Left colon (tissue), 2 donors: ENCODE measurements at regions of chr17 and their contacts with region 1.

Region 1: GRCh38 chr17:5055543-5055942 is 20.3 kb upstream of the SLC52A1 start:
- DNase-seq: no peak
- ATAC-seq: no peak

Region 2: GRCh38 chr17:4913994-4914393 is 141.5 kb before region 1 on chr17:
- intact Hi-C with region 1: loop called in 1 of 2 experiments (anchors 5 kb)
- DNase-seq: no peak
- ATAC-seq: peak; percentile 60

Region 3: GRCh38 chr17:4980644-4981216 is 74.8 kb before region 1 on chr17:
- intact Hi-C with region 1: loop called in 1 of 2 experiments (anchors 5 kb)
- DNase-seq: no peak
- ATAC-seq: peak; percentile 77

Region 4: GRCh38 chr17:4994081-4994595 is 61.4 kb before region 1 on chr17:
- intact Hi-C with region 1: no loop called
- DNase-seq: no peak
- ATAC-seq: no peak

Region 5: DNA sequence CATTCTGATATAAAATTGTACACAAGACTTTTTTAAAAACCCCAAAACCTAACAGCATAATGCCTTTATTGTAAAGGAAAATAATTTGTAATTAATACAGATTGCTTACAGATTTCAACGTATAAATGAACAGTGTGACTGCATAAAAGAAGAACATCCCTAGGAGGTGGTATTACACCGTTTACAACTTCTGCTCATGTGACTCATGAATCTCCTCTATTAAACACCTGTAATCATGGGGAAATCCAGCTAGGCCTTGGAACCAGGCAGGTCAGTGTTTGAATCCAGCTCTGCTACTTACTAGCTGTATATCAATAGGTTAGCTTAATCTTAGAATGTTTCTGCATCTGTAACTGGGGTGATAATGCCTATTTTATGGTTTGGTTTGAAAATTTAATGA is 241.7 kb after region 1 on chr17:
- intact Hi-C with region 1: no loop called
- DNase-seq: no peak
- ATAC-seq: peak; percentile 62